Activated naive CD8-positive, alpha-beta T cell treated with anti-CD3 and anti-CD28 coated beads, Interleukin-2, amount 10 ng/mL, durations not matched to agents 7 days and 5 days (primary cell): ENCODE measurements at regions of chr2 and their contacts with region 1.

Region 1: GRCh38 chr2:231687133-231687852 is 21.0 kb upstream of the PTMA start:
- DNase-seq: peak; percentile 78
- ATAC-seq: peak; percentile 87
- H3K4me3 Mint-ChIP-seq: no peak overlapping the region
- H3K27ac Mint-ChIP-seq: peak overlapping the region; percentile 43
- H3K4me1 Mint-ChIP-seq: peaks cover 9% of the 10 kb centered on the region
- H3K27me3 Mint-ChIP-seq: peaks cover 7% of the 10 kb centered on the region

Region 2: DNA sequence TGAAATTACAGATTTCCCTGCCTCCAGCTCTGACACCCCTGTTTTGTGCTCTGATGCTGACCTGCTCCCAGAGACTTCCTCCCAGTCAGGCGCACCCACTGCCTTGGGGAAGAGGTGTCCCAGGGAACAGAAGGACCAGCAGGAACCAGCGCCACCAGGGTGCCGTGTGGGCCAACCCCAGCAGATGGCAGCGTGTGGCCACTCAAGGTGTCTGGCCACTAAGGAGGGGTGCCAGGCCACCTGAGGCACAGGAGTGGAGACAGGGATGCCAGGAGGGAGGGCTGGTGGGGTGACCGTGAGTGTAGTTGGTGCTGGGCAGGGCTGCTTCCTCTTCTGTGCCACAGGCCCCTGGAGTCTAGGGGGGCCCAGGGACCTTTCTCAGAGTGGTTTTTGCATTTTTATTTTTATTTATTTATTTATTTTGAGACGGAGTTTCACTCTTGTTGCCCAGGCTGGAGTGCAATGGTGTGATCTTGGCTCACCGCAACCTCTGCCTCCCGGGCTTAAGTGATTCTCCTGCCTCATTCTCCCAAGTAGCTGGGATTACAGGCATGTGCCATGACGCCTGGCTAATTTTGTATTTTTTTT is 38.6 kb before region 1 on chr2:
- POLR2A ChIA-PET with region 1: no interaction called
- DNase-seq: peak; percentile 75
- ATAC-seq: peak; percentile 94
- H3K4me3 Mint-ChIP-seq: no peak overlapping the region
- H3K27ac Mint-ChIP-seq: no peak overlapping the region
- H3K4me1 Mint-ChIP-seq: peaks cover 2% of the 10 kb centered on the region
- H3K27me3 Mint-ChIP-seq: peaks cover 3% of the 10 kb centered on the region

Region 3: GRCh38 chr2:231713730-231714430 is 26.6 kb after region 1 on chr2:
- POLR2A ChIA-PET with region 1: interaction called, 13 read pairs
- DNase-seq: peak; percentile 92
- ATAC-seq: peak; percentile 20
- H3K4me3 Mint-ChIP-seq: peak overlapping the region; percentile 57
- H3K27ac Mint-ChIP-seq: peak overlapping the region; percentile 89
- H3K4me1 Mint-ChIP-seq: peaks cover 24% of the 10 kb centered on the region
- H3K27me3 Mint-ChIP-seq: no peaks in the 10 kb centered on the region